ENCODE measurements at regions of chr2 and their contacts with region 1.

Region 1: GRCh38 chr2:223993621-223994232 is 36.5 kb downstream of the MRPL44 start:
- DNase-seq: peak; percentile 78
- ATAC-seq: peak; percentile 64
- H3K4me3 Mint-ChIP-seq: no peak overlapping the region
- H3K27ac Mint-ChIP-seq: peak overlapping the region; percentile 56
- H3K4me1 Mint-ChIP-seq: peaks cover 19% of the 10 kb centered on the region
- H3K27me3 Mint-ChIP-seq: no peaks in the 10 kb centered on the region

Region 2: GRCh38 chr2:223970343-223971128 is 23.2 kb before region 1 on chr2:
- CTCF ChIA-PET with region 1: interaction called, 77 read pairs
- POLR2A ChIA-PET with region 1: no interaction called
- intact Hi-C with region 1: loop called (anchors 1 kb)
- DNase-seq: peak; percentile 69
- ATAC-seq: peak; percentile 81
- H3K4me3 Mint-ChIP-seq: no peak overlapping the region
- H3K27ac Mint-ChIP-seq: no peak overlapping the region
- H3K4me1 Mint-ChIP-seq: peaks cover 14% of the 10 kb centered on the region
- H3K27me3 Mint-ChIP-seq: no peaks in the 10 kb centered on the region

Region 3: GRCh38 chr2:224008702-224009261 is 15.1 kb after region 1 on chr2:
- CTCF ChIA-PET with region 1: interaction called, 16 read pairs
- POLR2A ChIA-PET with region 1: no interaction called
- intact Hi-C with region 1: no loop called
- DNase-seq: no peak
- ATAC-seq: no peak
- H3K4me3 Mint-ChIP-seq: no peak overlapping the region
- H3K27ac Mint-ChIP-seq: no peak overlapping the region
- H3K4me1 Mint-ChIP-seq: peaks cover 5% of the 10 kb centered on the region
- H3K27me3 Mint-ChIP-seq: no peaks in the 10 kb centered on the region

Region 4: GRCh38 chr2:224033601-224034000 is 39.9 kb after region 1 on chr2:
- CTCF ChIA-PET with region 1: interaction called, 7 read pairs
- POLR2A ChIA-PET with region 1: no interaction called
- intact Hi-C with region 1: loop called in 1 of 2 experiments (anchors 2 kb)
- DNase-seq: no peak
- ATAC-seq: no peak
- H3K4me3 Mint-ChIP-seq: no peak overlapping the region
- H3K27ac Mint-ChIP-seq: no peak overlapping the region
- H3K4me1 Mint-ChIP-seq: peaks cover 38% of the 10 kb centered on the region
- H3K27me3 Mint-ChIP-seq: peaks cover 24% of the 10 kb centered on the region

Region 5: DNA sequence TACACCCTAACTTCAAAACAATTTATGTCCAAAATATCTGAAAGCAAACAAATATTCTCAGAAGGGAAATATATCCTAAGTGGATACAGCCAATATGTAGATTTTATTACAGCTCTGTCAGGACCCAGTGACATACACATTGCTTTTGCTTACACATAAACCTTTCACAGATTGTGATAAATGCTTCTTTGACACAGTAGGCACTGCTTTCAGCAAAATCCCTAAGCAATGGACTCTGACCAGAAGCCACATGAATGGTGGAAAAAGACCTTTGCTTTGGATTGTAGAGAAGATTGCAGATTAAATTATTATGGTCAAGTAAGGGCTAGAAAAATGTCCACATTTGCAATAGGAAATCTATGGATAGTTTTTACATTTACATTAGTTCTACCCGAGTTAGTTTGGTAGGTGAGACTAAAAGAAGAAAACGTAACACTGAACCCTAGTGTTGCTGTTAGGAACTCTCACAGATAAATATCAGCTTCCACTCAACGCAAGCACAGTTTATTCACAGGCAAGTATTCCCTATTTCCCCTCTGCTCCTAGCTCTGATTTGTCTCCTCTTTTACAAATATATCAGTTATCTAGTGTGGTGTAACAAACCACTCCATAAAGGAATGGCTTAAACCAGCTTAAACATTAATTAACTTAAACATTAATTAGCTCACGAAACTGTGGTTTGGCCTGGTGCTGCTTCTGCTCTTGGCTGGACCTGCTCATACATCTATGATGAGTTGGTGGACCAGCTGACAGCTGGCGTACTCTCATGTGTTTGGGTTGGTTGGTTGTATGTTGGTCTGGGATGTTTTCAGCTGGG is 69.0 kb after region 1 on chr2:
- CTCF ChIA-PET with region 1: interaction called, 31 read pairs
- POLR2A ChIA-PET with region 1: no interaction called
- intact Hi-C with region 1: loop called (anchors 2 to 5 kb)
- DNase-seq: no peak
- ATAC-seq: no peak
- H3K4me3 Mint-ChIP-seq: no peak overlapping the region
- H3K27ac Mint-ChIP-seq: no peak overlapping the region
- H3K4me1 Mint-ChIP-seq: no peaks in the 10 kb centered on the region
- H3K27me3 Mint-ChIP-seq: no peaks in the 10 kb centered on the region

Region 6: GRCh38 chr2:224357098-224357901 is 363.6 kb after region 1 on chr2:
- CTCF ChIA-PET with region 1: no interaction called
- POLR2A ChIA-PET with region 1: no interaction called
- intact Hi-C with region 1: loop called in 1 of 2 experiments (anchors 10 kb)
- DNase-seq: peak; percentile 71
- ATAC-seq: peak; percentile 78
- H3K4me3 Mint-ChIP-seq: no peak overlapping the region
- H3K27ac Mint-ChIP-seq: no peak overlapping the region
- H3K4me1 Mint-ChIP-seq: no peaks in the 10 kb centered on the region
- H3K27me3 Mint-ChIP-seq: no peaks in the 10 kb centered on the region